Activated B cell treated with CpG ODN at 0.5 μM for 24 hours (primary cell): ENCODE measurements at regions of chr7 and their contacts with region 1.

Region 1: DNA sequence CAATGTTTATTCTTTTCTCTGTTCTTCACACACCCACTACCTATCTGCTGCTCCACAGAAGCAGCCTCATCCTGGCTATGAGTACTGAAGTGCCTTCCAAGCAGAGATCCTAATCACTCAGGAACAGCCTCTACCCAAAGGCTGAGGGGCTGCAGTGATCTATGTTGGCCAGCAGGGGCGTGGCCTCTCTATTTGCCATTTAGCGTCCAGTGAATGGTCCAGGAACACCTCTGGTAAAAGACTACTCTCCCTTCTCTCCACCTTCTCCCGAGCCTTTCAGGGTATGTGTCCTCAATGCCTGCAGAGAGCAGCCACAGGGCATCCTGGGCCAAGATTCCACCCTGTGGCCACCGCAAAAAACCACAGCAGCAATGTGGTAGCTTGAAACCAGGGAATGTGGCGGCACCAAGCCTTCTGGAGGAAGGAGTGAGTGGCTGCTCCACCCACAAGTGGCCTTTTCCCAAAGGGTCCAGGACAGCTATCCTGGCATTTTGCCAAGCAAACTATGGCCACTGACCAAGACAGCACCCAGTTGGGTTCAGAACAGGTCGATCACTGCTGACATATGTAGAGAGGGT is 70.9 kb downstream of the SYPL1 start:
- DNase-seq: no peak
- ATAC-seq: peak; percentile 66
- H3K4me3 Mint-ChIP-seq: no peak overlapping the region
- H3K27ac Mint-ChIP-seq: no peak overlapping the region
- H3K4me1 Mint-ChIP-seq: peaks cover 19% of the 10 kb centered on the region
- H3K27me3 Mint-ChIP-seq: no peaks in the 10 kb centered on the region
- CTCF ChIP-seq: peak; percentile 53

Region 2: DNA sequence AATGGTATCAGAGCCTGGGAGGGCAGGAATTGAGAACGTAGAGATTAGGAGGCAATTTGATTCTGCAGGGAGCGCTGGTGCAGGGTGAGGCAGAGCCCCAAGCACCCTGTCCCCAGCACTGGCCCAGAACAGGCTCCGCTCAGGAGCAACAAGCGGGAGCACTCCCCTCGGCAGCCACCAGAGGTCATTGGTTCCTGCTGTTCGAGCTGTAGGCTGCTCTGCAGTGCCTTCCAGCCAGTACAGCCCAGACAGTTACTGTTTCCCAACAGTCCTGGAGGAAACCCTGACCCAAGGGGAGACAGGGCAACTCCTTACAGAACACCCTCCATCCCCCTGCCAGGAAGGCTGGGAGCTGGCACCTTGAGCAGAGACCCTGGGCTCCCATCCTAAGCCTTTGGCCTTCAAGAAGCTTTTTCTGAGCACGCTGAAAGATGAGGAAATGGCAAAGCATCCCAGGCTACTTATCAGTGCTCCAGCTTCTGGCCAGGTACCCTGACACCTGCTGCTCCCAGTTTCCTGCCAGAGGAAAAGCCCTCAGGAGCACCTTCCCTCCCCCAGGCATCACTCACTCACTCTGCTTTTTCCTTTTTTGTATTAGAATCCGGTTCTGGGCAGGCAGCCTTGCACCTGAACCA is 388.8 kb before region 1 on chr7:
- CTCF ChIA-PET with region 1: interaction called, 18 read pairs
- POLR2A ChIA-PET with region 1: no interaction called
- intact Hi-C with region 1: loop called (anchors 1 kb)
- DNase-seq: peak; percentile 45
- ATAC-seq: peak; percentile 94
- H3K4me3 Mint-ChIP-seq: no peak overlapping the region
- H3K27ac Mint-ChIP-seq: no peak overlapping the region
- H3K4me1 Mint-ChIP-seq: peaks cover 2% of the 10 kb centered on the region
- H3K27me3 Mint-ChIP-seq: no peaks in the 10 kb centered on the region
- CTCF ChIP-seq: no peak

Region 3: DNA sequence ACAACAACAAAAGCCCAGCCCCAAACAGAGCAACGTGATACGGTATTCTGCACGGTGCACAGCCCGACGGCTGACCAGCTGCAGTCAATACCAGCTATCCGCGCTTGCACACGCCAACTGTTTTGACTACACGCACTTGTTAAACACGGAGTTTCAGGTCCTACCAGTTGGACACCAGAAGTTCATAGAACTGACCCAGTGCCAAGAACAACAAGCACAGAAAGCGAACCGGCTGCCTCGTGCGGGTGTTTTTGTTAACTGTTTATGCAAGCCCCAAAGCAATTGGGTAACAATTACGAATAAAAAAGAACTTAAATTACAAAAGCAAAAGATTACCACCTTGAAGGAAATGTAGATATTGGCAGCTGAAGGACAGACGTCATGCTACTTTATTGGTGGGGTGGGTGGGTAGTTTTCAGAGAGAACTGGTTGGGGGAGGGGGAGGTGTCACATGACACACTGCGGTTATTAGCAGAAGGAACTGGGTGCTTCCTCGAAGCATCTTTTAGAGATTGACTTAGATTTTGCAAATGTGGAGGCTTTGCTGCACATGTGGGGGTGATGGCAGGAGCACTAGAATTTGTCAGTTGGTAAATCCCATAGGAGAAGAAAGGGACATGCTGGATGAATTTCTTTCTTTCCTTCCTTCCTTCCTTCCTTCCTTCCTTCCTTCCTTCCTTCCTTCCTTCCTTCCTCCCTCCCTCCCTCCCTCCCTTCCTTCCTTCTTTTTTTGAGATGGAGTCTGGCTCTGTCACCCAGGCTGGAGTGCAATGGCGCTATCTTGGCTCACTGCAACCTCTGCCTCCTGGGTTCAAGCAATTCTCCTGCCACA is 349.3 kb before region 1 on chr7:
- CTCF ChIA-PET with region 1: interaction called, 7 read pairs
- POLR2A ChIA-PET with region 1: no interaction called
- intact Hi-C with region 1: loop called (anchors 1 kb)
- DNase-seq: peak; percentile 40
- ATAC-seq: peak; percentile 75
- H3K4me3 Mint-ChIP-seq: peak overlapping the region; percentile 90
- H3K27ac Mint-ChIP-seq: peak overlapping the region; percentile 91
- H3K4me1 Mint-ChIP-seq: peaks cover 40% of the 10 kb centered on the region
- H3K27me3 Mint-ChIP-seq: no peaks in the 10 kb centered on the region
- CTCF ChIP-seq: no peak

Region 4: DNA sequence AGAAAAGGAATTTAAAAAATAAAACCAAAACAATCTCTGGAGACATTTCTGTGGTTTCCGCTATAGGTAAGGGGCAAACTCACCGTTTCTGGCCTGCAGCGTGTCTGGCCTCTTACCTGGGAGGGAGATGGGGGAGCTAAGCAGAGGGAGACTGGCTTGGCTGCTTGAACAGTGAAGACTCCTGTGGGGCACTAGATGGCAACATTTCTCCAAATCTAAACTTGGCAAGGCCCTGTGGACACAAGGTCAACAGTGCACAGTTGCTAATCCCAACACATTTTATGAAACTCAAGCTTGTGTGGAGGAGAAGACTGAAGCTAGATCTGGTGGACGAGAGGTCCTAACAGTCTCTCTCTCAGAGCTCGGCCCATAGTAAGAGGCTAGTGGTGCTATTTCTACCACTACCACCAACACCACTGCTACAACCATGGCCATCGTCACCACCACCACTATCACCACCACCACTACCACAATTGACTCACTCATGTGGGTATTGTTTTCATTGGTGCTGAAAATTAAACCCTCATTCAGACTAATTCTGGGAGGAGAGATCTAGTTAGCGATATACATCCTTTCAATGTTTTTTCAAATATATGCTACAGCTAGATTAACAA is 106.5 kb before region 1 on chr7:
- CTCF ChIA-PET with region 1: interaction called, 4 read pairs
- POLR2A ChIA-PET with region 1: no interaction called
- intact Hi-C with region 1: loop called (anchors 5 kb)
- DNase-seq: no peak
- ATAC-seq: no peak
- H3K4me3 Mint-ChIP-seq: no peak overlapping the region
- H3K27ac Mint-ChIP-seq: no peak overlapping the region
- H3K4me1 Mint-ChIP-seq: no peaks in the 10 kb centered on the region
- H3K27me3 Mint-ChIP-seq: no peaks in the 10 kb centered on the region
- CTCF ChIP-seq: no peak

Region 5: DNA sequence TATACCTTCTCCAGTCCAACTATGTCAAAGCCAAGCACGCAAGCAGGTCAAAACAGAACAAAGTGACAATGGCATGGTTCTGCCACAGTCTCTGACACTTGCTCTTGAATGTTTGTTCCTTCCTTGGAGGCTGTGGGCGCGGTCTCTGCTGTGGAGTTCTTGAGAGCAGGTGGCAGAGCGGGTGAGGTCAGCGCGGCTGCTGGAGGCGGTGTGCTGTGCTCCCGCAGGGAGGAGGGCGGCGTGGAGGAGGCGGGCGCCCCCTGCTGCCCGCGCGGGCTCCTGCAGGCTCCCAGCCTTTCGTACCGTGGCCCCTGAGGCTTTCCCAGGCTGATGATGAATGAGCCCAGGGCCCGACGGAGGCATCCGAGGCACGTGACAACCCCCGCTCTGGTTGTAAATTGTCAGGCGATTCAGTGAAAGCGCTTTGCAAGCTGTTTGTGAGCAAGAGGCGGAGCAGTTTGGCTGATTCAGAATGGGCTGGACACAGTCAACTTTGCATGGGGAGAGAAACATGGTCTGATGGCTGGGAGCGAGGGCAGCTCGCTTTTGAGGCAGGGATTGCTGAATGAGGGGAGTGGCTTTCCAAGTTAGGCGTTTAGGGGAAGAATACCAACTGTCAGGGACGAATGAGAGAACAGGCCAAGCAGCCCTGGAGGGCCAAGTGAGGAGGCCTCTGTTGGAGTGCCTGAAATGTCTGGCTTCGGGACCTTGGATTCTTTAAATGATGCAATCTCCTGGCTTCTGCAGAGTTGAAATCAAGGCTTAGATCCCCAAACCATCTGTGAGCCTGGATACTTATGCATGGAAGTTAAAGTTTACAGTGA is 31.6 kb before region 1 on chr7:
- CTCF ChIA-PET with region 1: interaction called, 4 read pairs
- POLR2A ChIA-PET with region 1: no interaction called
- intact Hi-C with region 1: loop called (anchors 1 kb)
- DNase-seq: peak; percentile 73
- ATAC-seq: peak; percentile 98
- H3K4me3 Mint-ChIP-seq: no peak overlapping the region
- H3K27ac Mint-ChIP-seq: no peak overlapping the region
- H3K4me1 Mint-ChIP-seq: peaks cover 22% of the 10 kb centered on the region
- H3K27me3 Mint-ChIP-seq: peaks cover 4% of the 10 kb centered on the region
- CTCF ChIP-seq: no peak

Region 6: DNA sequence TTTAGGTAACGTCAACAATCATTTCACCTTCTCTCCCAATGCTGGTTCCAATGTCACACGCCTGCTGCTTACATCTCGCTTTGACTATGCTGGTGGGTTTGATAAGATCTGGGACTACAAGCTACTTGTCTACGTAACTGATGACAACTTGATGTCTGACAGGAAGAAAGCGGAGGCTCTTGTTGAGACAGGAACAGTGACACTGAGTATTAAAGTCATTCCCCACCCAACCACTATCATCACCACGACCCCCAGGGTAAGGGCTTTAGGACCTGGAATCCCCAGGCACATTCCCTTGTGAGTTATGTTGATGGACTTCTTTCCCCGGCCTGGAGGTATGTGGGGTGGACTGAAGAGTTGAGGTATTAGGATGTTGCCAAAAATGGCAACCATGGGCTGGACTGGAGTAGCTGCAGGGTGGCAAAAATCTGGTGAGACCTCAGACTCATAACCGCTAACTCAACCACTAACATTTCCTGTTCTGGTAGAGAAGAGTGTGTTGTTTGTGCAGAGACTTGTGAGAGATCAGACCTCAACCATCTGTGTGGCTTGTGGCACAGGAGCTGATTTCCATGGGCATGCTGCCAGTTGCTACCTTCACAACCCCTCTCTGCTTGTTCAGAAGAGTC is 18.9 kb before region 1 on chr7:
- CTCF ChIA-PET with region 1: interaction called, 10 read pairs
- POLR2A ChIA-PET with region 1: no interaction called
- intact Hi-C with region 1: loop called (anchors 2 kb)
- DNase-seq: no peak
- ATAC-seq: peak; percentile 65
- H3K4me3 Mint-ChIP-seq: peak overlapping the region; percentile 42
- H3K27ac Mint-ChIP-seq: peak overlapping the region; percentile 50
- H3K4me1 Mint-ChIP-seq: peaks cover 61% of the 10 kb centered on the region
- H3K27me3 Mint-ChIP-seq: no peaks in the 10 kb centered on the region
- CTCF ChIP-seq: no peak

Region 7: GRCh38 chr7:106064771-106065585 is 23.7 kb after region 1 on chr7:
- CTCF ChIA-PET with region 1: no interaction called
- POLR2A ChIA-PET with region 1: no interaction called
- intact Hi-C with region 1: no loop called
- DNase-seq: no peak
- ATAC-seq: no peak
- H3K4me3 Mint-ChIP-seq: no peak overlapping the region
- H3K27ac Mint-ChIP-seq: peak overlapping the region; percentile 99
- H3K4me1 Mint-ChIP-seq: peaks cover 95% of the 10 kb centered on the region
- H3K27me3 Mint-ChIP-seq: no peaks in the 10 kb centered on the region
- CTCF ChIP-seq: no peak